ENCODE measurements at regions of chr10 and their contacts with region 1.

Region 1: GRCh38 chr10:95246579-95247051 is 44.2 kb downstream of the PDLIM1 start:
- DNase-seq: peak; percentile 88
- ATAC-seq: peak; percentile 75
- H3K4me3 Mint-ChIP-seq: no peak overlapping the region
- H3K27ac Mint-ChIP-seq: no peak overlapping the region
- H3K4me1 Mint-ChIP-seq: peaks cover 4% of the 10 kb centered on the region
- H3K27me3 Mint-ChIP-seq: peaks cover 9% of the 10 kb centered on the region
- CTCF ChIP-seq: peak; percentile 80

Region 2: GRCh38 chr10:94630017-94630688 is 616.5 kb before region 1 on chr10:
- CTCF ChIA-PET with region 1: interaction called, 7 read pairs
- POLR2A ChIA-PET with region 1: no interaction called
- intact Hi-C with region 1: loop called (anchors 10 kb)
- DNase-seq: no peak
- ATAC-seq: no peak
- H3K4me3 Mint-ChIP-seq: no peak overlapping the region
- H3K27ac Mint-ChIP-seq: no peak overlapping the region
- H3K4me1 Mint-ChIP-seq: no peaks in the 10 kb centered on the region
- H3K27me3 Mint-ChIP-seq: peaks cover 1% of the 10 kb centered on the region
- CTCF ChIP-seq: peak; percentile 81

Region 3: DNA sequence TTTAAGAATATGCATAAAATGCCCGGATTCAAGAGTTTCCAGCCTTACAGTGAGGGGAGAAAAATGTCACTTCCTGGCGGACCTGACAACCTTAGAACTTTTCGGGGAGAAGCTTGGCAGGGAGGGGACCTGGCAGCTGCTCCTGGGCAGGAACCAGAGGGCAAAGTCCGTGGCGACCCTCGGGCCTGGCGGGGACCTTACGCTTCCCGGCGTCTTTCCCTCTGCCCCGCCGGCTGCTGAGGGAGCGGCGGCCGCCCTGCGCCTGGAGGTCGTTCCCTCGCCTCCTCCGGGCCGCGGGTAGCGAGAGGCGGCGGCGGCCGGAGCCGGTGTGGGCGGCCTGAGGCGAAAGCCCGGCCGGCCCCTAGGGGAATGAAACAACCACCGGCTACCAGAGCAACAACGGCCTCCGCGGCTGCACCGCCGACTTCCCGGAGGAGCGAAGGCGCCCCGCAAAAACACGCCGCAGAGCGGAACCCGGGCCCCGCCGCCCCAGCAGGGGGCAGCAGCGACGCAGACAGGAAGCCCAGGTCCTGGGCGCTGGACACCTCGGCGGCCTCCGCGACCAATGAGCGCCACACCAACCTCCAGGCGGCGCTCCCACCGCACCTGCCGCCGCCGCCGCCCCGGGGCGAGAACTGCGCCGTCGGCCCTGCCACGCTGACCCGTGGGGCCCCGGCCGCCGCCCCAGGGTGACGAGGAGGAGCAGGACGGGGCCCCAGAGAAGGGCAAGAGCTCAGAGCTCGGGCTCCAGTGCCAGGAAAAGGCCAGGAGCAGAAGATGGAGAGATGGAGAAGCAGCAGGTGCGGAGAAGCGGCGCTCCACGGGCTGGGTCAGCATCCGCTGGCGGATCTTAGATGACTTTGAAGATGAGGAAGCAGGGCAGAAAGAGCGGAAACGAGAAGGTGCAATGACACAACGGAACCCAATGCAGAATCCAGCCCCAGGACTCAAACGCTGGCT is 63.1 kb before region 1 on chr10:
- CTCF ChIA-PET with region 1: interaction called, 44 read pairs
- POLR2A ChIA-PET with region 1: no interaction called
- intact Hi-C with region 1: loop called (anchors 5 kb)
- DNase-seq: peak; percentile 78
- ATAC-seq: peak; percentile 94
- H3K4me3 Mint-ChIP-seq: peak overlapping the region; percentile 65
- H3K27ac Mint-ChIP-seq: no peak overlapping the region
- H3K4me1 Mint-ChIP-seq: peaks cover 4% of the 10 kb centered on the region
- H3K27me3 Mint-ChIP-seq: peaks cover 22% of the 10 kb centered on the region
- CTCF ChIP-seq: peak; percentile 91

Region 4: DNA sequence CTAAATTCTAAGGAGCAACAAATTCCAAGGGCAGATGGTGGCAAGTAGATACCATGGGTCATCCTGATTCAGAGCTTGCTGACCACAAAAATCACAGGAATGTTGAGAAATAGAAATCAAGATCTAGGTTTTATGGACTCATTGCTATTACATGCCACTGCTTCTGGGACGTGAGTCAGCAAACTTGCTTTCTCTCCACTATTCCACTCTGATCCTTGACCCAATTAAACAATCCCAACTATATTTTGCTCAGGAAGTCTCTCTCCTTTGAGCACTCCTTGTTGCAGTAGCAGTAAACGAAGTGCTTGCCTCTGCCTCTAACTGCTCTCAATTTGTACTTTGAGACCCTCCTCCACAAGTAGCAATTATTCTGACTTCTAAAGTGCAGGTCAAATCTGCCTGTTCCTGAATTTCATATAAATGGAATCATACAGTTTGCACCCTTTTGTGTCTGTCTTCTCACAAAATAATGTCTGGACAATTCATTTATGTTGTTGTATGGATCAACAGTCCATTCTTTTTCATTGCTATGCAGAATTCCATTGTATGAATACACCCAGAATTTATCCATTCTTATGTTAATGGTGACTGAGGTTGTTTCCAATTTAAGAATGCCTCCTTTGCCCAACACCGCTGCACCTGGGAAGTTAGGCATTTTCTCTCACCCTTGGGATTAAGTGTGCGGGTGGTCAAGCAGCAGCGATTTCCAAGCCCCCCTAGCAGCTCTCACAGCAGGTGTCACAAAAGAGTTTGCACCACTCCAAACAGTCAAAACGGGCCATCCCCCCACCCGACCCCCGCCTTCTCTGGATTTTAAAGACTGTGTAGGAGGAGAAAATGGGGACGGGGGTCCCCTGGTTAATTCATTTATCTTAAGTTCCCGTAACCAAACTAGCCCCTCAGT is 16.6 kb before region 1 on chr10:
- CTCF ChIA-PET with region 1: interaction called, 14 read pairs
- POLR2A ChIA-PET with region 1: interaction called, 3 read pairs
- intact Hi-C with region 1: no loop called
- DNase-seq: no peak
- ATAC-seq: no peak
- H3K4me3 Mint-ChIP-seq: peak overlapping the region; percentile 67
- H3K27ac Mint-ChIP-seq: peak overlapping the region; percentile 83
- H3K4me1 Mint-ChIP-seq: peaks cover 11% of the 10 kb centered on the region
- H3K27me3 Mint-ChIP-seq: peaks cover 8% of the 10 kb centered on the region
- CTCF ChIP-seq: no peak

Region 5: GRCh38 chr10:95350219-95350829 is 103.7 kb after region 1 on chr10:
- CTCF ChIA-PET with region 1: interaction called, 244 read pairs
- POLR2A ChIA-PET with region 1: no interaction called
- intact Hi-C with region 1: no loop called
- DNase-seq: no peak
- ATAC-seq: no peak
- H3K4me3 Mint-ChIP-seq: no peak overlapping the region
- H3K27ac Mint-ChIP-seq: no peak overlapping the region
- H3K4me1 Mint-ChIP-seq: no peaks in the 10 kb centered on the region
- H3K27me3 Mint-ChIP-seq: no peaks in the 10 kb centered on the region
- CTCF ChIP-seq: no peak

Region 6: DNA sequence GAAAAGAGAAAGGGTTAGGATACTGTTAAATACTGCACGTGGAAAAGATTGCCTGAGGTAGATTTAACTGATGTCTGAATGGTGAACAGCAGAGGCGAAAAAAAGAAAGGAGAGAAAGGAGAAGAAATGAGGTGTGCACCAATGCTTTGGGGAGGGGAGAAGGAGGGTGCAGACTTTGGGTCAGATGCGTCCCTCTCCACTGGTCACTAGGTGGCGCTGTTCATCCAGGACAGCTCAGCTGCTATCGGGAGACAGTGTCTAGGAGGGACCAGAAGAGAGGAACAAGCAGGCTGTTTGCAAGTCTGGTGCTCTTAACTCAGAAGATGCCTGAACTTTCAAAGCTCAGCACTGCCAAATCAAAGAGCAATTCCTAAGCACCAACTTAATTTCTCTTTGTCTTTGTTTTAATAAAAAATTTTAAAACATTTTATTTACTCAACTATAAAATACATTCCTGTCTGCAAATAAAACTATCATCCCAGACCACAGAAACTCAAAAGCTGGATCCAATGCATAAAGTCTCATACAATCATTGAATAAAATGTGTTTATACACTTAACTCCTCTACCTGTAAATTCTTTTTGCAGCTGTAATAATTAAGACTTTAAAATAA is 128.1 kb after region 1 on chr10:
- CTCF ChIA-PET with region 1: interaction called, 10 read pairs
- POLR2A ChIA-PET with region 1: no interaction called
- intact Hi-C with region 1: no loop called
- DNase-seq: peak; percentile 75
- ATAC-seq: peak; percentile 97
- H3K4me3 Mint-ChIP-seq: no peak overlapping the region
- H3K27ac Mint-ChIP-seq: no peak overlapping the region
- H3K4me1 Mint-ChIP-seq: no peaks in the 10 kb centered on the region
- H3K27me3 Mint-ChIP-seq: peaks cover 10% of the 10 kb centered on the region
- CTCF ChIP-seq: peak; percentile 78

Measured in activated CD8-positive, alpha-beta T cell treated with anti-CD3 and anti-CD28 coated beads for 36 hours (primary cell).